ENCODE measurements at regions of chr11 and their contacts with region 1.

Region 1: DNA sequence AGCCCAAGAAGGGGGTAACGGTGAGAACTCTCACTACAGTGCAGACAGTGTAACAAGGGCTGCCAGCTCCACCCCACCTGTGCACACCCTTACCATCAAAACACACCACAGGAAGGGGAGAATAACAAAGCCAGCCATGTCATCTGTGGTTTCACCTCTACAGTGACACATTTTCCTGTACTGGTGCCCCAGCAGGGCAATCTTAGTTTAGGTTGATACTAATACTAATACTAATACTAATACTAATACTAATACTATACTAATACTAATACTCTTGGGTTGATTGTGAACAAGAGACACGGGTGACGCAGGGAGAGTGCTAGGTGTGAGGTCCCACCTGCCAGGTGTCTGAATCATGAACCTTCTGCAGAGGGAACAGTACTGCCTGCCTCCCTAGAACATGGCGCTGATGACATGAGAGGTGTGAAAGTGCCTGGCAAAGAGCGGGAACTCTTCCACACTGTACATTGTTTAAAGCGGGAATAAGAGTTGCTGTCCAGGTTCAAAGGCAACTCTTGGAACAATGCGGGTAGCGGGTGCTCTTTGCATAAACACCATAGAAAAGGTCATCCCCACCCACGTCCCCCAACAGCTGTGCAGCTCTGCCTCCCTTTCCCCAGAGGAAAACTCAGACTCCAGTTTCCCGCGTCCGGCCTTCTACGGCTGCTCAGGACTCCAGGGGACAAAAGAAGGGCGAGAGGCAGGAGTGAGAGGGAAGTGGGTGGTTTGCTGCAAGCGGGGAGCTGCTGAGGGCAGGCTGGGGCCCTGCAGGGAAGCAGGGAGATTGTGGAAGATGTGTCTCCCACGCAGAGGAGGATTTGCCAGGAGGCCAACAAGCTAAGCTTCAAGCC is 25.0 kb upstream of the TMPRSS4 start:
- DNase-seq: peak; percentile 55 to 93 (median 77)
- ATAC-seq: peak; percentile 92
- H3K4me3 ChIP-seq: peak overlapping the region in 1 of 2 experiments; percentile 20
- H3K4me3 Mint-ChIP-seq: peak overlapping the region; percentile 67
- H3K27ac ChIP-seq: peak overlapping the region; percentile 49 to 69
- H3K27ac Mint-ChIP-seq: peak overlapping the region; percentile 98
- H3K4me1 ChIP-seq: peaks cover 59% of the 10 kb centered on the region
- H3K4me1 Mint-ChIP-seq: peaks cover 58% of the 10 kb centered on the region
- H3K27me3 ChIP-seq: no peaks in the 10 kb centered on the region
- H3K27me3 Mint-ChIP-seq: no peaks in the 10 kb centered on the region
- CTCF ChIP-seq: no peak

Region 2: DNA sequence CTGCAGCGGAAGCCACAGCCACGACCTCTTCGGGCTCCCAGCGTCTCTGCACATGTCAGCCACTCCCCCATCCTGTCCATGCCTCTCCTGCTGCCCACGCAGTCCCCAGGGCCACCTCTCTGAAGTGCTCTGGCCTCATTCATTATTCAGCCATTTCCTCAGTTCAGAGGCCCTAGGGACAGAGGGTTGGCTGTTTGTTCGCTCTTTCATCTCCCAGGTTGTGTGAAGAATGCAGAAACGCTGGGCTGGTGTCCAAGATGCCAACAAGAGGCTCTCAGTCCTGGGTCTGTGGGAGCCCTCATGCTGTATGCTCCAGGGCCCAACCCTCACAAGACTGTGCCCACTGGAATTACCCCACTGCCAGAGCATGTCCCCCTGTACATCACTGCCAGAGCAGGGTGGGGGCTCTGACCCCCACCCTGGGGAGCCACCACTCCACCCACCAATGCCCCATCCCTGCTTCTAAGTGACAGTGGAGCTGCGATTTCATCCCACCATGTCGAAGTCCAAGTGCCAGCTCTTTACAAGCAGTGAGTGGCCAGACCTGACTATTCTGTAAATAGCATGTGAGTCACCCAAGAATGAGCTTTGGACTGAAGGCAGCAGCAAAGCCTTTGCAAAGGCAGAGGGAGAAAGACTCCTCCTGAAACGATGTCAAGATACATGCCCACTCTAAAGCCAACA is 1488.7 kb before region 1 on chr11:
- CTCF ChIA-PET with region 1: no interaction called
- POLR2A ChIA-PET with region 1: no interaction called
- intact Hi-C with region 1: no loop called
- DNase-seq: no peak
- ATAC-seq: no peak
- H3K4me3 ChIP-seq: no peak overlapping the region
- H3K4me3 Mint-ChIP-seq: no peak overlapping the region
- H3K27ac ChIP-seq: no peak overlapping the region
- H3K27ac Mint-ChIP-seq: no peak overlapping the region
- H3K4me1 ChIP-seq: no peaks in the 10 kb centered on the region
- H3K4me1 Mint-ChIP-seq: no peaks in the 10 kb centered on the region
- H3K27me3 ChIP-seq: no peaks in the 10 kb centered on the region
- H3K27me3 Mint-ChIP-seq: peaks cover 11% of the 10 kb centered on the region
- CTCF ChIP-seq: no peak

Region 3: DNA sequence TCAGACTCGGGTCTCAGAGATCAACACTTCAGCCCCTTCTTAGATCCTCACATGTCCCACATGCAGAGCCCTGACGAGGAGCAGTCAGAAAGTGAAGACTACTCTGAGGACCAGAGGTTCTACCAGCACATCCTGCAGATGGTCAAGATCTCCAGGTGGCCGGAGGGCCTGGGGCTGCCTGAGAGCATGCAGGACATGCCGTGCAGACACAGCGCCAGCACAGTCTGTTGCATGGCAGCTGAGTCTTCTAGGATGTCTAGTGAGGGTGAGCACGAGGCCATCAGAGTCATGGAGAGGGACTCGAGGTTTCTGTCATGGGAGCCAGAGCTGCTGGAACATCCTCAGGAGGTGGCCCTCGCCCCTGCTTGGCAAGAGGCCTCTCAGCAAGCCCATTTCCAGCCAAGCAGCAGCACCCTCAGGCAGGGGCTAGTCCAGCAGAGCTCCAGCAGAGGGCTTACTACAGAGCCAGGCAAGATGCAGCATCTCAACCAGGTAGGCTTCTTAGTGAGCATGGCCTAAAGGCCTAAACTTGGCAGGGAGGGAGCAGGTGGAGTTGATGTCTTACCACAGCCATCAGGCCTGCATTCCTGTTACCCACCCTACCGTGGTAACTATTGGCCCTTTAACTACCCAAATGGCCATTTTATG is 695.6 kb before region 1 on chr11:
- CTCF ChIA-PET with region 1: no interaction called
- POLR2A ChIA-PET with region 1: no interaction called
- intact Hi-C with region 1: no loop called
- DNase-seq: no peak
- ATAC-seq: no peak
- H3K4me3 ChIP-seq: no peak overlapping the region
- H3K4me3 Mint-ChIP-seq: no peak overlapping the region
- H3K27ac ChIP-seq: no peak overlapping the region
- H3K27ac Mint-ChIP-seq: no peak overlapping the region
- H3K4me1 ChIP-seq: no peaks in the 10 kb centered on the region
- H3K4me1 Mint-ChIP-seq: no peaks in the 10 kb centered on the region
- H3K27me3 ChIP-seq: no peaks in the 10 kb centered on the region
- H3K27me3 Mint-ChIP-seq: no peaks in the 10 kb centered on the region
- CTCF ChIP-seq: no peak

Region 4: DNA sequence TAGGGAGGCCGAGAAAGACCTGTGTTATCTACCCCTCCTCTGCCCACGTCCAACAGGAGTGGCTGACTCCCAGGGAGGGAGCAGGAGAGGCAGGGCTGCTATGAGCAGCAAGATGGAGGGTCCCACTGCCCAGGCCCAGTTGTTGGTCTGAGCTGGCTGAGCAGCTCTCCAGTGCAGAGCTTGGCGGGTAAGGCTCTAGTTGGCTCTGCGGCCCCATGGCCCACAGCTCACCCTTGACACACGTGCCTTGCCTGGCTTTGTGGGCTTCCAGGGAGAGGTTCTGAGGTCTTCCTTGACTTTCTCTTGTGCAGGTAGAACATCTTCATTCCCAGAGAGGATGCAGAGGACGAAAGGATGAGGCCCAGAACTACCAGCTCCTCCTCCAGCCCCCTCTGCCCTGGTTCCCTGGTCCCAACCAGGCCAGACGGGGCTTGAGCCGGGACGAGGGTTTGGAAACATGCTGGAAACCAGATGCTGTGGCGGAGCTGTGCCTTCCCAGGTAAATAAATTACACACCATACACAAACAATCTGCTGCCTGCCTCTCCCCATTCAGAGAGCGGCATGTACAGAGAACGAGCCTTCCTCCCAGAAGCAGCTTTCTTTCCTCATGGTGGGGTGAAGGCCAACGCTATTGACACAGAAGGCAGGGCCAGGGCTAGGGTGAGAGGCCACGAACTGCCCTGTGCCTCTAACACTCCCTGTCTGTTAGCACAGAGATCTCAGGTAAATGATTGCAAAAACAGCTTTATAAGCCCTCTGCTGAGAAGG is 302.9 kb before region 1 on chr11:
- CTCF ChIA-PET with region 1: no interaction called
- POLR2A ChIA-PET with region 1: no interaction called
- intact Hi-C with region 1: no loop called
- DNase-seq: no peak
- ATAC-seq: no peak
- H3K4me3 ChIP-seq: no peak overlapping the region
- H3K4me3 Mint-ChIP-seq: no peak overlapping the region
- H3K27ac ChIP-seq: no peak overlapping the region
- H3K27ac Mint-ChIP-seq: no peak overlapping the region
- H3K4me1 ChIP-seq: no peaks in the 10 kb centered on the region
- H3K4me1 Mint-ChIP-seq: no peaks in the 10 kb centered on the region
- H3K27me3 ChIP-seq: no peaks in the 10 kb centered on the region
- H3K27me3 Mint-ChIP-seq: peaks cover under 1% of the 10 kb centered on the region
- CTCF ChIP-seq: no peak

Region 5: GRCh38 chr11:117807482-117808327 is 244.1 kb before region 1 on chr11:
- CTCF ChIA-PET with region 1: interaction called, 149 read pairs
- POLR2A ChIA-PET with region 1: no interaction called
- intact Hi-C with region 1: loop called (anchors 1 kb)
- DNase-seq: peak; percentile 58 to 85 (median 78)
- ATAC-seq: peak; percentile 89
- H3K4me3 ChIP-seq: no peak overlapping the region
- H3K4me3 Mint-ChIP-seq: no peak overlapping the region
- H3K27ac ChIP-seq: no peak overlapping the region
- H3K27ac Mint-ChIP-seq: no peak overlapping the region
- H3K4me1 ChIP-seq: peaks cover 4% of the 10 kb centered on the region
- H3K4me1 Mint-ChIP-seq: peaks cover 7% of the 10 kb centered on the region
- H3K27me3 ChIP-seq: no peaks in the 10 kb centered on the region
- H3K27me3 Mint-ChIP-seq: no peaks in the 10 kb centered on the region
- CTCF ChIP-seq: peak; percentile 94

Region 6: DNA sequence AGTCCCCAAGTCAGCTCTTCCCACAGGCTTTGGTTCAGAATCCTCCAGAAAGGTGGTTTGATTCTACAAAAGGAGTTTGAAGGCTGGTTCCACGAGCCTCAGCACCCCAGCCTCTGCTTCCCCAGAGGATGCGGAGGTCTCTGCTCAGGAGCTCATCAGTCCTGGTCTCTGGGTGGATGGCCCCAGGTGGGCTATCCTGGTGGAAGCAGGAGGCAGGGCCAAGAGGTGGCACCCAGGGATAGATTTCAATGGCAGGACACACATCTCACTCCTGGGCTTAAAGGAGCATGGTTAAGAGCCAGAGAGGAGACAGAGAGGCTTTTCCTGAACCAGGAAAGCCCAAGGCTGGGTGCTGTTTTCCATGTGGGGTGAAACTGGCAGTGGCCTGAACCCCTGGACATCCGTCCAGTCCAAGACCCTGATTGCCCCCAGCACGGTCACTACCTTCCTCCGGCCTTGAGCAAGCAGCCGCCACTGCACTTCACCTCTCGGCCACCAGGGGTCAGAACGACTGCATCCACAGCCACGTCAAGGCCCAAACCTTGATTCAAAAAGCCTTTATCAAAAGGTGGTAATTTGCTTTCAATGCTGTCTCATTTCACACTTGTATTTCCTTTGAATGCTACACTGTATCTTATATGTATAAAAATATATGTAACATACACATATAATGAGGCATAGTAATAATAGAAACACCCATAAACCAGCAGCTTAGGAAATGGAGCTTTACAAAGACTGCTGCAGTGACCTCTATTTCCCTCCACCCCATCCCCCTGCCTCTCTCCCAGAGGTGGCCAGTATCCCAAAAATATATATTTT is 208.0 kb before region 1 on chr11:
- CTCF ChIA-PET with region 1: interaction called, 213 read pairs
- POLR2A ChIA-PET with region 1: interaction called, 3 read pairs
- intact Hi-C with region 1: loop called (anchors 1 kb)
- DNase-seq: peak; percentile 61 to 91 (median 84)
- ATAC-seq: peak; percentile 97
- H3K4me3 ChIP-seq: no peak overlapping the region
- H3K4me3 Mint-ChIP-seq: no peak overlapping the region
- H3K27ac ChIP-seq: no peak overlapping the region
- H3K27ac Mint-ChIP-seq: no peak overlapping the region
- H3K4me1 ChIP-seq: no peaks in the 10 kb centered on the region
- H3K4me1 Mint-ChIP-seq: peaks cover 4% of the 10 kb centered on the region
- H3K27me3 ChIP-seq: no peaks in the 10 kb centered on the region
- H3K27me3 Mint-ChIP-seq: no peaks in the 10 kb centered on the region
- CTCF ChIP-seq: peak; percentile 98

Region 7: DNA sequence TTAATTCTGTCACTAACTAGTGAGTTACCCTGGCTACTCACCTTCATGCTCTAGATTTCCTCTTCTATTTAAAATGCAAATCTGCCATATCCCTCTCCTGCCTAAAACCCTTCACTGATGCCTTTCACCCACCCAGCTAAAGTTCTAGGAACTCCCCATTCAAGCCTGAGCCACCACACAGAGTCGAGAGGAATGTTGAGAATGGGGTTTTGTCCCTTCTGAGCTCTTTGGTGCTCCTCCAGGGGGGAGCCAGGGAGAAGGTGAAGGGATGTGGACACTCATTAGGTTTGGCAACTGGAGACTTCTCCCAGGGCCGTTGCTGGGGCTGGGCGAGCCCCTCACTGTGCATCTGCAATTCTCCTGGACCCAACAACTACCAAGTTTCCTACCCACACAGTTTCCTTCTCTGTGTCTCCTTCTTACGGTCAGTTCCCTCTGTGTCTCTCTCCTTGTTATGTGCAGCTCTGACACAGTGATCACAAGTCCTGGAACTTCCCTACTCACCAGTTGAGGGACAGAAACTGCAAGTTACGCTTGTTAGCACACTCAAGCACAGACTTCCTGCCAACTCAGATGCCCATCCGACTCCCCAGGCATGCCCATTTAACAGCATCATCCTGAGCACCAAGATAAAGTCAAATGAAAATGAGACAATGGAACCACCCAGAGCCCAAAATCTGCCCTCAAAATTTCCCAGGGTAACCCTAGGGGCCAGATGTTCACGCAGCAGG is 72.2 kb before region 1 on chr11:
- CTCF ChIA-PET with region 1: interaction called, 270 read pairs
- POLR2A ChIA-PET with region 1: interaction called, 31 read pairs
- intact Hi-C with region 1: no loop called
- DNase-seq: peak in 2 of 9 experiments; percentile 53 to 66
- ATAC-seq: peak; percentile 45
- H3K4me3 ChIP-seq: no peak overlapping the region
- H3K4me3 Mint-ChIP-seq: peak overlapping the region; percentile 13
- H3K27ac ChIP-seq: peak overlapping the region in 1 of 2 experiments; percentile 24
- H3K27ac Mint-ChIP-seq: peak overlapping the region; percentile 49
- H3K4me1 ChIP-seq: peaks cover 70% of the 10 kb centered on the region
- H3K4me1 Mint-ChIP-seq: peaks cover 76% of the 10 kb centered on the region
- H3K27me3 ChIP-seq: no peaks in the 10 kb centered on the region
- H3K27me3 Mint-ChIP-seq: no peaks in the 10 kb centered on the region
- CTCF ChIP-seq: no peak

Region 8: GRCh38 chr11:118010738-118011461 is 40.9 kb before region 1 on chr11:
- CTCF ChIA-PET with region 1: interaction called, 36 read pairs
- POLR2A ChIA-PET with region 1: interaction called, 176 read pairs
- intact Hi-C with region 1: no loop called
- DNase-seq: peak in 2 of 9 experiments; percentile 32 to 63
- ATAC-seq: no peak
- H3K4me3 ChIP-seq: no peak overlapping the region
- H3K4me3 Mint-ChIP-seq: no peak overlapping the region
- H3K27ac ChIP-seq: peak overlapping the region in 1 of 2 experiments; percentile 84
- H3K27ac Mint-ChIP-seq: peak overlapping the region; percentile 15
- H3K4me1 ChIP-seq: peaks cover 100% of the 10 kb centered on the region
- H3K4me1 Mint-ChIP-seq: peaks cover 98% of the 10 kb centered on the region
- H3K27me3 ChIP-seq: no peaks in the 10 kb centered on the region
- H3K27me3 Mint-ChIP-seq: no peaks in the 10 kb centered on the region
- CTCF ChIP-seq: no peak

Region 9: DNA sequence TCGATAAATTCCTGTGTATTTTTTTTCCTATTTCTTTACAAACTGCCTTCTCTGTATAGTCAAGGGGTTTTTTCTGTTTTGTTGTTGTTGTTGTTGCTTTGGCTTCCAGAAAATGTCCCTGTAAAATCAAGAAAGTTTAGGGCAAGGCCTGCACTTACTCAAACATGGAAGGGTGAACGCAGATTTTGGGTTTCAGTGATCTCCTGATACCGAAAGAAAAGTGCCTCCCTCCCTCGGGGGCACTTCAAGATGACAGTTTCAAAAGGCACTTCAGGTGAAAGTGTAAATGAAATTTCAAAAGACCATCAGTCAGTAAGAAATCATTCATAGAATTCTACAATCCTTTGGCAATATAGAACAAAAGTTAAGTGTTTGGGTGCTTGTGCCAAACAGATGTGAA is 18.4 kb before region 1 on chr11:
- CTCF ChIA-PET with region 1: interaction called, 10 read pairs
- POLR2A ChIA-PET with region 1: interaction called, 3 read pairs
- intact Hi-C with region 1: loop called (anchors 1 to 2 kb)
- DNase-seq: no peak
- ATAC-seq: no peak
- H3K4me3 ChIP-seq: no peak overlapping the region
- H3K4me3 Mint-ChIP-seq: no peak overlapping the region
- H3K27ac ChIP-seq: no peak overlapping the region
- H3K27ac Mint-ChIP-seq: no peak overlapping the region
- H3K4me1 ChIP-seq: peaks cover 4% of the 10 kb centered on the region
- H3K4me1 Mint-ChIP-seq: peaks cover 34% of the 10 kb centered on the region
- H3K27me3 ChIP-seq: no peaks in the 10 kb centered on the region
- H3K27me3 Mint-ChIP-seq: no peaks in the 10 kb centered on the region
- CTCF ChIP-seq: no peak

Measured in CD8-positive, alpha-beta T cell (primary cell).